IMR-90 (cell line): ENCODE measurements at regions of chr5 and their contacts with region 1.

Region 1: DNA sequence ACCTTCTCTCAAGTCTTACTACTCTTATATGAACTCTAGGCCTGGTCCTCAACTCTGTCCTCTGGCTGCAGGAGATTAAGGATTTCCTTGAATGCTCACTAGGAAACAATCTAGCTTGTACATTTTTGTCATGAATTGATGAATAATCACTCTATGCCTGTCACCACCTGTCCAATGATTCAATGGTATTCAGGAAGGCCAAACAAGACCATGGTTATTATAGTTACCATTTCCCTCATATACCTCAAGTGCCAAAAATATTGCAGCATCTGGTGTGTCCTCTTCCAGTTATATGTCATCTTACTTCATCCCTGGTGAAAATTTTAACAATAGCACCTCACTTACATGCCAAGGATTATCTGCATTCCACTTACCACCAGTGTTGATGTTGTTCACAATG is 179.0 kb upstream of the MOCS2 start:
- DNase-seq: no peak
- ATAC-seq: no peak
- H3K4me3 ChIP-seq: no peak overlapping the region
- H3K27ac ChIP-seq: no peak overlapping the region
- H3K4me1 ChIP-seq: no peaks in the 10 kb centered on the region
- H3K27me3 ChIP-seq: no peaks in the 10 kb centered on the region
- CTCF ChIP-seq: no peak
- POLR2A ChIP-seq: no peak
- RAD21 ChIP-seq: no peak

Region 2: GRCh38 chr5:53323943-53324642 is 35.6 kb after region 1 on chr5:
- CTCF ChIA-PET with region 1: no interaction called
- POLR2A ChIA-PET with region 1: no interaction called
- dilution Hi-C with region 1: no loop called
- in situ Hi-C with region 1: no loop called
- intact Hi-C with region 1: loop called (anchors 5 kb)
- DNase-seq: peak; percentile 34
- ATAC-seq: no peak
- H3K4me3 ChIP-seq: no peak overlapping the region
- H3K27ac ChIP-seq: no peak overlapping the region; the same call in 1 of the 2 replicates
- H3K4me1 ChIP-seq: peaks cover 7% of the 10 kb centered on the region; the same call in 1 of the 2 replicates
- H3K27me3 ChIP-seq: no peaks in the 10 kb centered on the region
- CTCF ChIP-seq: no peak
- POLR2A ChIP-seq: no peak
- RAD21 ChIP-seq: no peak

Region 3: DNA sequence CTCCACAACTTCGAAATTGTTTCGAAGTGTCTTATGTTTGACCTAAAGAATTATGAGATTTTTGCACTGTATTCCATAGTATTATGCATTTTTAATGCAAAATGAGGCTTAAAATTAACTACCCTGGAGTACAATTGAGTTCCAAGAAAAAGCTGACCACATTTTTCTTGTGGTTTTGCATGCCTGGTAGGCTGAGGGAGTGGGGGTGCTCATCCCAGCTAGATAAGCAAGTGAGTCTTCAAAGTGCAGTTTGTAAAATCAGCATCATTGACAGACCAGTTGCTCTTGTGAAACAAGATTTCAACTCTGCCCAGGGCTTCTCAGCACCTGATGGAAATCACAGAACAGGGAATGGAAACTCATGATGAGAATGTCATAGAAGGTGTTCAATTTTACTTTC is 254.9 kb after region 1 on chr5:
- CTCF ChIA-PET with region 1: no interaction called
- POLR2A ChIA-PET with region 1: no interaction called
- dilution Hi-C with region 1: no loop called
- in situ Hi-C with region 1: no loop called
- intact Hi-C with region 1: no loop called
- DNase-seq: peak; percentile 66
- ATAC-seq: peak; percentile 61
- H3K4me3 ChIP-seq: no peak overlapping the region
- H3K27ac ChIP-seq: no peak overlapping the region
- H3K4me1 ChIP-seq: no peaks in the 10 kb centered on the region
- H3K27me3 ChIP-seq: no peaks in the 10 kb centered on the region; the same call in 1 of the 2 replicates
- CTCF ChIP-seq: no peak
- POLR2A ChIP-seq: no peak
- RAD21 ChIP-seq: no peak

Region 4: GRCh38 chr5:54249210-54250028 is 960.9 kb after region 1 on chr5:
- CTCF ChIA-PET with region 1: no interaction called
- POLR2A ChIA-PET with region 1: no interaction called
- dilution Hi-C with region 1: no loop called
- in situ Hi-C with region 1: no loop called
- intact Hi-C with region 1: no loop called
- DNase-seq: peak; percentile 41
- ATAC-seq: no peak
- H3K4me3 ChIP-seq: no peak overlapping the region
- H3K27ac ChIP-seq: no peak overlapping the region
- H3K4me1 ChIP-seq: no peaks in the 10 kb centered on the region
- H3K27me3 ChIP-seq: no peaks in the 10 kb centered on the region
- CTCF ChIP-seq: no peak
- POLR2A ChIP-seq: no peak
- RAD21 ChIP-seq: no peak